OCI-LY7 (cell line): ENCODE measurements at regions of chr12 and their contacts with region 1.

Region 1: DNA sequence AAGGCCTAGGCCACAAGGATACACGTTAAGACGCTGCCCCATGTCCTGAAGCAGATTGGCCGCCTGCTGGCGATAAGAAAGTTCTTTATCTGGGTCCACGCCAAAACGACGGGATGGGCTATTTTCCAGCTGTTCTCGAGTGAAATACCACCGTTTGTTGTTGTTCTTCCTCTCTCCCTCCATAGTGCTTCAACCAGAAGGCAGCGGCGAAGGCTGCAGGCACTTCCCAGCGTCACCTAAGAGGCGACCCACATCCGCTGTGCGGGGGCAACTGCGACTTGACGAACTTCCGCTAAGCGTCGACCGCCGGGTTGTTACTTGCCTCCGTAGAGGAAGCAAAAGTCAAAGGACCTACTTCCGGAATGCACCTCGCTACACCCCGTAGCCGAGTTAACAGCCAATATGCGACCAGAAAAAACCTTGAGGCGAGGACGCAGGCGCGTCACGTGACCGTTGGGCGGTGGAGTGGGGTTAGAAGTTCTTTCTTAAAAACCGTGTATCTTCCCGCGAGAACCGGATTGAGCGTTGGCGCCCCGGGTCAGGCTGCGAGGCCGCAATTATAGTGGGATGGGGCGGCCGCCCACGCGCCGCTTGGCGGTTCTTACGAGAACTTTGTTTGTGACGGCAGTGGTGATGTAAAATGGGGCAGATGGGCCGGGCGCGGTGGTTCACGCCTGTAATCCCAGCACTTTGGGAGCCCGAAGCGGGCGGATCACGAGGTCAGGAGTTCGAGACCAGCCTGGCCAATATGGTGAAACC is at the start of gene CCNT1:
- DNase-seq: peak; percentile 100
- H3K4me3 ChIP-seq: peak within 1 kb of the TSS; percentile 92
- H3K27ac ChIP-seq: peak within 1 kb of the TSS; percentile 82
- H3K4me1 ChIP-seq: peaks cover 19% of the 10 kb centered on the region
- CTCF ChIP-seq: 0 out of 2 replicates have a peak, but pooled peaks have one; percentile 7
- total RNA-seq, gene CCNT1: 23.6 and 30.9 TPM in 2 replicates

Region 2: GRCh38 chr12:48668996-48669395 is 47.7 kb before region 1 on chr12:
- CTCF ChIA-PET with region 1: no interaction called
- POLR2A ChIA-PET with region 1: no interaction called
- intact Hi-C with region 1: no loop called
- DNase-seq: no peak
- H3K4me3 ChIP-seq: no peak overlapping the region
- H3K27ac ChIP-seq: no peak overlapping the region
- H3K4me1 ChIP-seq: no peaks in the 10 kb centered on the region
- CTCF ChIP-seq: no peak

Region 3: DNA sequence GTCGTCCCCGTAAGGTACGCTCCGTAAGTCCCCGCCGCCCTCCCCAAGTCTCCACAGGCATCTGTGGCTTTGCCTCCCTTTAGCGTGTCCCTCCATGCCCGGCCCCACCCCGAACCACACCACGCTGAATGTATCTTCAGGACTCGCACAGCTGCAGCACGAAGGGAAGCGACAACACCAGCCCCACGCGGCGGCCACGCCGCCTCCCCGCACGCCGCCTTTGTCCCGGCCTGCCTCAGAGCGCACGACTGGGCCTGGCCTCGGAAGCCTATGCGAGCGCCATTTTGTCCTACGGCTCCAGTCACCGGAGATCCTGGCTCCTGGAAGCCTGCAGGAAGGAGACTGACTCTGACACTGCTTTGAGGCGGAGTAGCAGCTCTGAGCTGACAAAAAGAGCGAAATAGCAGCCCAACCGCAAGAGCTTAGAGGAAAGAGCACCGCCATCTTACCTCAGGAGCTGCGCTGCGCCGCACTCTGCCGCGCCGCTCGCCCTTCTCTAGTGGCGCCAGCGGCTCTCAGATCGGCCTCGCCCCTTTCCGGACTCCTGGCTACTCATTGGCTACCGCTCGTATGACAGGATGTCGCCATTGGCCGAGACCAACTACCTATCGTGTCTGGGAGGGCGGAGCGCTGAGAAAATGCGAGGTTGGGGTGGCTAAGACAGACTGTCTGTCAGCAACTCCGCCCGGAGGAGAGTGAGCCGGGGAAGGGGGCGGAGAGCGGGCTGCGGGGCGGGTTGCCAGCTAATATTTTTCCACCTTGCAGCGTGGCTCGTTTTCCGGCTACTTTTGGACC is 34.7 kb before region 1 on chr12 and contains the start of gene KANSL2:
- CTCF ChIA-PET with region 1: no interaction called
- POLR2A ChIA-PET with region 1: interaction called, 4 read pairs
- intact Hi-C with region 1: loop called (anchors 1 kb)
- DNase-seq: peak; percentile 99
- H3K4me3 ChIP-seq: peak within 1 kb of the TSS; percentile 87
- H3K27ac ChIP-seq: peak within 1 kb of the TSS; percentile 56
- H3K4me1 ChIP-seq: peaks cover 43% of the 10 kb centered on the region
- CTCF ChIP-seq: no peak
- total RNA-seq, gene KANSL2: 47.1 and 58.5 TPM in 2 replicates

Region 4: DNA sequence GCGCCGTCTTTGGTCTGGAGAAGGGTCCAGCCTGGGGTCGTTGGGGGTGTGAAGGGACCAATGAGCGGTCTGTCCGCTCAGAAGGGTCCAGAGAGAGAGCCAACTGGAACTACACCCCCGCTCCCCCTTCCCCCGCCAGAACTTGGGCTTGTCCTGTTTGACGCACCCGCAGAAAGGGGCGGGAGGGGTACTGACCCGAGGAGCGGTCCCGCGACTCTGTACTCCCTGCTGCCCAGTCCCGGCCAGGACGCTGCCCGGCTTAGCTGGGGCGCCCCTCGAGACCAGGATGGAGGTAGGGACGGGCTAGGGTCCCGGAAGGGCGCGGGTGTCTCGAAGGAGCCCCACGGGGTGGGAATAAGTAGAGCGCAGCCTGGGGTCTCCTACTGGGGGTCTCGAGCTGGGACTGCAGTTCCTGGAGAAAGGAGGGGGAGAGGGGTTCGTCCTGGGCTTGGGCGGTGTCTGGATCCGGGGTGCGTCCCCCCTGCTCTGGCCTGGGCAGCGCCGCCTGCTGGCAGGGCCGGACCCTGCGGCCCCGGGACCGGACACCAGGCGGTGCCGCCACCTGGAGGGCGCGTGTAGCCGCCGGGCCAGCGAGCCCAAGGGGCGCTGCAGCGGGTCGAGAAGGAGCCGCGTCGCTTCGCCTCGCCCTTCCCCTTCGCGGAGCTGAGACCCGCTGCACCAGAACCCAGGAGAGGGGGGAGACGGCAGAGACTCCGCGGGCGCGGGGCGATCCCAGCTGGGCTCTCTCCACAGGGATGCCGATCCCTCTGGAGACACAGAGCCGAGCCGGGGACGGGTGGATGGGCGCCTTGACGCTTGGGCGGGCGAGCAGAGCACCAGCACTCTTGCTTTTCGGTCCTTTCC is 97.8 kb after region 1 on chr12:
- CTCF ChIA-PET with region 1: no interaction called
- POLR2A ChIA-PET with region 1: interaction called, 4 read pairs
- intact Hi-C with region 1: loop called (anchors 1 kb)
- DNase-seq: peak; percentile 90
- H3K4me3 ChIP-seq: peak overlapping the region; percentile 72
- H3K27ac ChIP-seq: peak overlapping the region; percentile 60
- H3K4me1 ChIP-seq: peaks cover 27% of the 10 kb centered on the region
- CTCF ChIP-seq: peak; percentile 98